Activated B cell treated with CpG ODN at 0.5 μM for 24 hours (primary cell): ENCODE measurements at regions of chr14 and their contacts with region 1.

Region 1: DNA sequence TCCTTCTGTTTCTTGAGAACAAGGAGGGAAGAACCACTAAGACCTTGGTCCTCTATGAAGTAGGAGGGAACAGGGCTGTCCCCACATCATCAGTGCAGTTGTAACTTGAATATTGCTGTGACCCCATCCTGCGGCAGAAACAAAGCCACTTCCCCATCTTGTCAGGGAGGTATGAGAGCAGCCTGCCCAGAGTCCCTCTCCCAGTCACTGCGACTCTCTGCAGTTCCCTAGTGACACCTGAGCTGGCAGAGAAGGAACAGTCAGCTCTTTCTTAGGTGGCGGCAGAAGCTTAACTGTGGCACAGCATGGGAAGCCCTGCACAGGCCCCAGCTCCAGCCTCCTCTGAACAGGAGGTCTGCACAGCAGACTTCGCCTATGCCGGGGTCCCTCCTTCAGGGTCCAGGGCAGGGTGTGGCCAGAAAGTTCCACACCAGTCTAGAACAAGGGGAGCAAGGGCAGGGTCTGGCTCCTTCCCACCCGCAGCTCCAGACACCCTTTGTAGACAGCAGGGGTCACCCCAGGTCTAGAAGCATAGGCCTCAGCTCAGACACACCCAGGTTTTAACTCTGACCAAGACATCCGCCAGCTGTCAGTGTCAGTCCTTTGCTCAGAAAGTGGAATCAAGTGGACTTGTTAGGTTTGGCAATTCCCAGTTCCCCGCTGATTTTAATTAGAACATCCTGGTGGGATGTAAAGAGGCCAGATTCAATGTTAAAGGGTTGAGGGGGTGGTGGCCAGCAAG is 36.8 kb downstream of the DEGS2 start:
- DNase-seq: no peak
- ATAC-seq: no peak
- H3K4me3 Mint-ChIP-seq: no peak overlapping the region
- H3K27ac Mint-ChIP-seq: no peak overlapping the region
- H3K4me1 Mint-ChIP-seq: peaks cover 15% of the 10 kb centered on the region
- H3K27me3 Mint-ChIP-seq: no peaks in the 10 kb centered on the region
- CTCF ChIP-seq: no peak

Region 2: GRCh38 chr14:100155042-100155846 is 32.6 kb after region 1 on chr14:
- CTCF ChIA-PET with region 1: no interaction called
- POLR2A ChIA-PET with region 1: no interaction called
- intact Hi-C with region 1: loop called (anchors 5 kb)
- DNase-seq: no peak
- ATAC-seq: no peak
- H3K4me3 Mint-ChIP-seq: no peak overlapping the region
- H3K27ac Mint-ChIP-seq: no peak overlapping the region
- H3K4me1 Mint-ChIP-seq: peaks cover 31% of the 10 kb centered on the region
- H3K27me3 Mint-ChIP-seq: no peaks in the 10 kb centered on the region
- CTCF ChIP-seq: no peak